Heart right ventricle (tissue), 16 donors: ENCODE measurements at regions of chr12 and their contacts with region 1.

Region 1: GRCh38 chr12:92111256-92111655 is 34.4 kb downstream of the BTG1 start:
- DNase-seq: no peak
- ATAC-seq: no peak
- H3K4me3 ChIP-seq: no peak overlapping the region
- H3K27ac ChIP-seq: no peak overlapping the region
- H3K4me1 ChIP-seq: peaks cover 0 to 27% (median 3%) of the 10 kb centered on the region in 9 donors
- H3K27me3 ChIP-seq: no peaks in the 10 kb centered on the region
- CTCF ChIP-seq: no peak

Region 2: DNA sequence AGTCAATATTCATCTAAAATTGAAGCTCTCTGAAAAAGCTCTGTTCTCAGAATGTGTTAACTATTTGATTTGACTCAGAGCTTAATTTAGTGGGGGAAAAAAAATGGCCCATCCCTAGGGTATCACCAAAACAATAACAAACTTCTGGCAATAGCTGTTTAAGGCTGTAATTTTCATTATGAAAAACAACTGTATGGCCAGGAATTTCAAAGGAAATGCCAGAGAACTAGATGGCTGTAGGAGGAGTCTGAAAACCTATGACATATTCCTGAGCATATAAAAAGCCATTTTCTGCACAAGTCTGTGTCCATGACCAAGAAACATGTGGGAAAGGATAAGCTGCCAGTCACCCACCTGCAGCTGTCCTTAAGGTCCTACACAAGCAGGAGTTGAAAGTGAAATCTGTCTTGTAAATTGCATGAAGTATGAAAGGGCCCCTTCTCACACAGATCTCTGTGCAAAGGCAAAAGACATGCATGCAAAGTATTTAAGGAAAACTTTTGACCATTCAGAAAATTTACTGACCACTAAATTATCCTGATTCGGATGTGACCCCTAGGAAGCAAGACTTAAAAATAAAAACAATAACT is 264.7 kb before region 1 on chr12:
- intact Hi-C with region 1: loop called in 1 of 10 experiments (anchors 10 kb)
- DNase-seq: no peak
- ATAC-seq: peak in 3 of 8 donors; percentile 17 to 41 (median 39)
- H3K4me3 ChIP-seq: no peak overlapping the region
- H3K27ac ChIP-seq: no peak overlapping the region
- H3K4me1 ChIP-seq: peaks cover 0 to 12% (median 0%) of the 10 kb centered on the region in 9 donors
- H3K27me3 ChIP-seq: no peaks in the 10 kb centered on the region
- CTCF ChIP-seq: no peak